Panc1 (cell line): ENCODE measurements at regions of chr14 and their contacts with region 1.

Region 1: DNA sequence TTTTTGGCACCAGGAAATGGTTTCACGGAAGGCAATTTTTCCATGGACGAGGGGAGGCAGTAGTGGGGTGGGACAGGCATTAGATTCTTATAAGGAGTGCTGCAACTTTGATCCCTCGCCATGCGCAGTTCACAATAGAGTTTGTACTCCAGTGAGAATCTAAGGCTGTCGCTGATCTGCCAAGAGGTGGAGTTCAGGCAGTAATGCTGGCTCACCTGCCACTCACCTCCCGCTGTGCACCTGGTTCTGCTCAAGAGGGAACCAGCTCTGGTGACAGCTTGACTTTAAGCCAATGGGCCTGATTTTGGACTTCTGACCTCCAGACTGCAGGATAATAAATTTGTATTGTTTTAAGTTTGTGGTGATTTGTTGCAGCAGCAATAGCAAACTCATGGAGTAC is 80.8 kb upstream of the TTC7B start:
- DNase-seq: no peak
- ATAC-seq: no peak
- H3K4me3 ChIP-seq: no peak overlapping the region
- H3K27ac ChIP-seq: no peak overlapping the region
- H3K4me1 ChIP-seq: no peaks in the 10 kb centered on the region
- H3K27me3 ChIP-seq: no peaks in the 10 kb centered on the region
- CTCF ChIP-seq: no peak

Region 2: DNA sequence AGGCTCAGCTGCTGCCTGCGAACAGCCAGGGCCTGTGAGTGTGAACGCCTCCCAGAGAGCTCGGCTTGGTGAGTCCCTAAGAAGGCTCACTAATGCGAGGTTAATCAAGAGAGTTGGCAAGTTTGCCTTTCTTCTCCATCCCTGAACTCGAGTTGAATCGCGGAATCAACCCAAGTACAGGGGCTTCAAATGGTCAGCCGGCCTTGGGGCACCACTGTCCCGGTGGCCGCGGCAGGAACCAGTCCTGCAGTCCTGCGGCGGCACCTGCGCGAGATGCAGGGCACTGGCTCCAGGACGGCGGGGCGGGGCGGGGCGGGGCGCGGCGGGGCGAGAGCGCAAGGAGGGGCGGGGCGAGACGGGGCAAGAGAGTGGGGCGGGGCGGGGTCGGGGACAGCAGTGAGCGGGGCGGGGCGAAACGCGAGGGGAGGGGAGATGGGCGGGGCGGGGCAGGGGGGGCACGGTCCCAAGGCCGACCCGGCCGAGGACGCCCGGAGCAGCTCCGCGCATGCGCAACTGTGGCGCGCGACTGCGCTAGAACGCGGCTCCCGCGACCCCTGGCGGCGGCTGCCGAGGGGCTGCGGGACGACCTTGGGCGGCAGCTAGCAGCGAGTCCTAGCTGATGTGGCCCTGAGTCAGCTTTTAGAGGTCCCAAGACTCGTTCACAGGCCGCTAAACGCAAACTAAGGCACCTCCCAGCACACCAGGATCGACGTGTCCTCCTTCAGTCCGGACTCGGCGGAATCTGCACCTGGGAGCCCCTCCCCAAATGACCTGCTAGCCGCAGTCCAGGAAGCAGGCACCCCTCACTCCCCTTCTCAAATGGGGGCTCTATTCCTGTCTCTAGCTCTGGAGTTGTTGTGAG is 138.8 kb before region 1 on chr14:
- CTCF ChIA-PET with region 1: no interaction called
- POLR2A ChIA-PET with region 1: no interaction called
- in situ Hi-C with region 1: no loop called
- intact Hi-C with region 1: loop called (anchors 5 kb)
- DNase-seq: peak; percentile 71
- ATAC-seq: peak; percentile 96
- H3K4me3 ChIP-seq: peak overlapping the region; percentile 47 to 78
- H3K27ac ChIP-seq: peak overlapping the region; percentile 87
- H3K4me1 ChIP-seq: peaks cover 7% of the 10 kb centered on the region
- H3K27me3 ChIP-seq: no peaks in the 10 kb centered on the region
- CTCF ChIP-seq: peak; percentile 85